ENCODE measurements at regions of chr1 and their contacts with region 1.

Region 1: DNA sequence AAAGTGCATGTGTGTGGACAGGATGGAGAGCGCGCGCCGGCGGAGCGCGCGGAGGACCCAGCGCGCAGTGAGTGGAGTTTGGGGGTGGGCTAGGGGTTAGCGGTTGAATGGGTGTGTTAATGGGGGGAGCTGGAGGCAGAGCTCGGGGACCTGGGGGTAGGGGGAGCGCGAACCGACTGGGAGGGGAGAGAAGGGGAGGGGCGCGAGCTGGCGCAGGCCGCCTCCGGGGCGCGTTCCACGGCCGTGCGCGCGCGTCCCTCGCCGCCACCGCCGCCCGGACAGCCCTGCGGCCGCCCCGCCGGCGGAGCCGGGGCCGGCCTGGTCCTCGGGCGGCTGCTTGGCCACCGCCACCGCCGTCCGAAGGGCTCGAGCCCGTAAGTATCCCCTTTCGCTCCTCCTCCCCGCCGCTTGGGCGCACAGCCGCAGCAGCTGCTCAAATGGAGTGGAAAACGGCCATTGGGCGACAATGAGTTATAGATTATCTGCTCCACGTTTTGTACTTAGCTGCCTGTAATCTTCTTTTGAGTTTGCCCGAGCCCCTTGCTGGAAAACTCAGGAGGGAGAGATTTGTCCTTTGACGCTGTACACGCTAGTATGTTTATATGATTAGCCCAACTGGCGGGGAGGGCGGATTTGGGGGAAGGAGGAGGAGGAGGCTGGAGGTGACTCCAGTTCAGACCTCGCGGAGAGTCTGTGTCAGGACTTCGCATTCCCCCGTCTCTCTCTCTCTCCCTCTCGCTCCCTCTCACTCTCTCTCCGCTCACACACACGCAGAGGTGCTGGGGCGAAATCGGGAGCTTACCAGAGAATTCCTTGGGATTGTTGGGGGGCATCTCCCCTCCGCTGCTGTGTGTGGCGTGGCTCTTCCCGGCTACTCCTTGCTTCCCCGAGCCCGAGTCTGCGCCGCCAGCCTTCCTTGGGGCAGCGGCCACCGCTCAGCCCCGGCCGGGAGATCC is at the start of gene ADGRL2:
- DNase-seq: no peak
- ATAC-seq: peak; percentile 76
- H3K4me3 ChIP-seq: no peak within 1 kb of the TSS
- H3K27ac ChIP-seq: no peak within 1 kb of the TSS
- H3K4me1 ChIP-seq: no peaks in the 10 kb centered on the region
- H3K27me3 ChIP-seq: peaks cover 10 to 11% of the 10 kb centered on the region in 2 experiments
- CTCF ChIP-seq: no peak
- EP300 ChIP-seq: no peak
- POLR2A ChIP-seq: no peak
- RAD21 ChIP-seq: no peak
- polyA plus RNA-seq, gene ADGRL2: 0.03 to 0.18 TPM

Region 2: GRCh38 chr1:81414488-81415015 is 386.4 kb before region 1 on chr1:
- CTCF ChIA-PET with region 1: no interaction called
- POLR2A ChIA-PET with region 1: no interaction called
- RAD21 ChIA-PET with region 1: no interaction called
- SMC1A ChIA-PET with region 1: no interaction called
- in situ Hi-C with region 1: no loop called
- intact Hi-C with region 1: loop called (anchors 10 kb)
- DNase-seq: peak; percentile 9
- ATAC-seq: peak; percentile 98
- H3K4me3 ChIP-seq: no peak overlapping the region
- H3K27ac ChIP-seq: no peak overlapping the region
- H3K4me1 ChIP-seq: no peaks in the 10 kb centered on the region
- H3K27me3 ChIP-seq: no peaks in the 10 kb centered on the region; a peak in 1 of 4 replicates
- CTCF ChIP-seq: peak; percentile 77 to 91 (median 85)
- EP300 ChIP-seq: no peak
- POLR2A ChIP-seq: no peak
- RAD21 ChIP-seq: peak; percentile 80

Region 3: GRCh38 chr1:81781749-81782148 is 19.2 kb before region 1 on chr1:
- CTCF ChIA-PET with region 1: interaction called, 5 read pairs
- POLR2A ChIA-PET with region 1: no interaction called
- RAD21 ChIA-PET with region 1: interaction called, 3 read pairs
- SMC1A ChIA-PET with region 1: interaction called, 12 read pairs
- in situ Hi-C with region 1: no loop called
- intact Hi-C with region 1: no loop called
- DNase-seq: no peak
- ATAC-seq: no peak
- H3K4me3 ChIP-seq: no peak overlapping the region
- H3K27ac ChIP-seq: no peak overlapping the region
- H3K4me1 ChIP-seq: no peaks in the 10 kb centered on the region
- H3K27me3 ChIP-seq: no peaks in the 10 kb centered on the region
- CTCF ChIP-seq: no peak
- EP300 ChIP-seq: no peak
- POLR2A ChIP-seq: no peak
- RAD21 ChIP-seq: no peak